ENCODE measurements at regions of chr5 and their contacts with region 1.

Region 1: GRCh38 chr5:150175076-150175935 is 8.7 kb downstream of the CDX1 start:
- DNase-seq: peak in 1 of 2 experiments; percentile 66
- H3K4me3 ChIP-seq: no peak overlapping the region
- H3K27ac ChIP-seq: no peak overlapping the region
- H3K4me1 ChIP-seq: no peaks in the 10 kb centered on the region; a peak in 1 of 7 replicates
- H3K27me3 ChIP-seq: peaks cover 2 to 21% (median 14%) of the 10 kb centered on the region in 4 experiments
- CTCF ChIP-seq: peak; percentile 76 to 92 (median 84)
- EP300 ChIP-seq: no peak
- POLR2A ChIP-seq: no peak
- RAD21 ChIP-seq: peak; percentile 53 to 75

Region 2: GRCh38 chr5:150075871-150076288 is 99.4 kb before region 1 on chr5:
- CTCF ChIA-PET with region 1: interaction called, 20 read pairs
- POLR2A ChIA-PET with region 1: no interaction called
- DNase-seq: peak in 1 of 2 experiments; percentile 32
- H3K4me3 ChIP-seq: no peak overlapping the region
- H3K27ac ChIP-seq: no peak overlapping the region
- H3K4me1 ChIP-seq: no peaks in the 10 kb centered on the region
- H3K27me3 ChIP-seq: no peaks in the 10 kb centered on the region
- CTCF ChIP-seq: peak; percentile 7 to 33 (median 22); a peak in 3 of 4 replicates
- EP300 ChIP-seq: no peak
- POLR2A ChIP-seq: no peak
- RAD21 ChIP-seq: peak; percentile 14 to 35; a peak in 2 of 4 replicates

Region 3: DNA sequence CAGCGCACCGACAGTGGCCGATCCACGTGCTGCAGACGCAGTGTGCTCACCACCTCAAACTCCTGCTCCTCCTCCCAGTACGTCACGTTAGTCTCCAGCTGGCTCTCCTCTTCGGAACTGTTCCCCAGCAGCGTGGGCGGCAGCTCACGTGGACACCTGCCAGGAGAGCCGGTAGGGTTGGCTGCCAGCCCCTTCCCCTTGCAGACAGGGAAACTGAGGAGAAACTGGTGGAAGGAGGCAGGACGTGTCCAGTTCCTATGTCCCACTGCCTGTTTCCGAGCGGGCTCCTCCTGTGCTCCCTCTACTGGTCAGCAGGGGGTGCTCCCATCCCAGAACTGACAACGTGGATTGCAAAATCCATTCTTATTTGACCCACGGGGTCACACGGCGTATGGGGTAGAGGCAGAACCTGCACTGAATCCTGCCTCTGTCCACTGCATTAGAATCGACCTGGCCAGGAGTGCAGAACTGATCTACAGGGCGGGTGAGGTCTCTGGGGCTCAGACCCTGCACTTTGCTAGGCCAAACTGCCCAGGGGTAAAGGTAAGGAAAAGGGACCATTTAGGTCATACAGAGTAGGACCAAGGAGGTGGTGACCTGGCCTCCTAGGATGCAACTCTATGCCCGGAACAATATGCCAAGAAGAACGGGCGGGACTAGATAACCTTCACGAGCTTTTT is 45.4 kb before region 1 on chr5:
- CTCF ChIA-PET with region 1: interaction called, 109 read pairs
- POLR2A ChIA-PET with region 1: interaction called, 3 read pairs
- DNase-seq: peak in 1 of 2 experiments; percentile 87
- H3K4me3 ChIP-seq: no peak overlapping the region
- H3K27ac ChIP-seq: no peak overlapping the region
- H3K4me1 ChIP-seq: peaks cover 5 to 12% (median 6%) of the 10 kb centered on the region in 4 experiments; a peak in 6 of 7 replicates
- H3K27me3 ChIP-seq: peaks cover 0 to 5% (median 3%) of the 10 kb centered on the region in 4 experiments; a peak in 3 of 7 replicates
- CTCF ChIP-seq: peak in 2 of 3 experiments; percentile 88 to 95; a peak in 3 of 4 replicates
- EP300 ChIP-seq: no peak
- POLR2A ChIP-seq: no peak
- RAD21 ChIP-seq: peak; percentile 92 to 93

Region 4: DNA sequence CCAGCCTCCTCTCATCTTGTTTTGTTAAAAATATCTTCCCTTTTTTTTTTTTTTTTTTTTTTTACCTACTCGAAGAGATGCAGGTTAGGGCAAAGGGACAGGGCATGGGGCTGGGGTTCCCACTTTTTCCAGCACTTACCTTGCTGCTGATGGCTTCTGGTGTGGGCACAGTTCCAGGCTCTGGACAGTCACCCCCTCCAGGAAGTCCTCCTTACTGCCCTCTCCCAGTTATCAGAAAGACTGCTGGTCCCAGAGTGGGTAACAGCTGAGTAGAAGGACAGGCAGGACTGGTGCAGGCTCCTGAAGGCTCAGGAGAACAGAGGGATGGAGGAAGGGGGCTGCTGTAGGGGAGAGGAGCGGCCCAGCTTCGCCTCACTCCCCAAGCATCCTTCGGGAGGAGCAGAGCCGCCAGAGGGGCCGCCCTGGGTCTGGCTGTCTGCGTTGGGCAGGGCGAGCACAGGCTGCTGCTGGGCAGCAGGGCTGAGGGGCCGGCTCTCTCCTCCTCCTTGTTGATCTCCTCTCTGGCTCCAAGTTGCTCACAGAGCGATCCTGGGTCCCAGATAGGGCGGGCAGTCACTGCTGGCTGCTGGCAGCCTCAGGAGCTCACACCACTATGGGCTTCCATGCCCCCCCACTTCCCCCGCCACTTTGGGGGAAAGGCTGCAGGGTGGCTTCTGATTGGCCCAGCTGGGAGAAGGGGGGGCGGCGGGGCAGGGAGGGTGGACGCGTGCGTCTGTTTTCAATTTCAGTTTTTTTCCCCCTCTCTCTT is 19.9 kb before region 1 on chr5 and contains the start of gene PDGFRB:
- CTCF ChIA-PET with region 1: interaction called, 268 read pairs
- POLR2A ChIA-PET with region 1: no interaction called
- DNase-seq: peak in 1 of 2 experiments; percentile 79
- H3K4me3 ChIP-seq: peak within 1 kb of the TSS; percentile 7 to 50 (median 24); a peak in 6 of 8 replicates
- H3K27ac ChIP-seq: no peak within 1 kb of the TSS
- H3K4me1 ChIP-seq: peaks cover 6 to 27% (median 13%) of the 10 kb centered on the region in 4 experiments
- H3K27me3 ChIP-seq: no peaks in the 10 kb centered on the region; a peak in 2 of 7 replicates
- CTCF ChIP-seq: no peak
- EP300 ChIP-seq: no peak
- POLR2A ChIP-seq: 0 out of 3 replicates have a peak, but pooled peaks of 1 of the 2 experiments have one; percentile 18
- RAD21 ChIP-seq: peak in 1 of 2 experiments; percentile 12; a peak in 1 of 4 replicates
- total RNA-seq, gene PDGFRB: 13.7 and 15.9 TPM in 2 replicates

Region 5: DNA sequence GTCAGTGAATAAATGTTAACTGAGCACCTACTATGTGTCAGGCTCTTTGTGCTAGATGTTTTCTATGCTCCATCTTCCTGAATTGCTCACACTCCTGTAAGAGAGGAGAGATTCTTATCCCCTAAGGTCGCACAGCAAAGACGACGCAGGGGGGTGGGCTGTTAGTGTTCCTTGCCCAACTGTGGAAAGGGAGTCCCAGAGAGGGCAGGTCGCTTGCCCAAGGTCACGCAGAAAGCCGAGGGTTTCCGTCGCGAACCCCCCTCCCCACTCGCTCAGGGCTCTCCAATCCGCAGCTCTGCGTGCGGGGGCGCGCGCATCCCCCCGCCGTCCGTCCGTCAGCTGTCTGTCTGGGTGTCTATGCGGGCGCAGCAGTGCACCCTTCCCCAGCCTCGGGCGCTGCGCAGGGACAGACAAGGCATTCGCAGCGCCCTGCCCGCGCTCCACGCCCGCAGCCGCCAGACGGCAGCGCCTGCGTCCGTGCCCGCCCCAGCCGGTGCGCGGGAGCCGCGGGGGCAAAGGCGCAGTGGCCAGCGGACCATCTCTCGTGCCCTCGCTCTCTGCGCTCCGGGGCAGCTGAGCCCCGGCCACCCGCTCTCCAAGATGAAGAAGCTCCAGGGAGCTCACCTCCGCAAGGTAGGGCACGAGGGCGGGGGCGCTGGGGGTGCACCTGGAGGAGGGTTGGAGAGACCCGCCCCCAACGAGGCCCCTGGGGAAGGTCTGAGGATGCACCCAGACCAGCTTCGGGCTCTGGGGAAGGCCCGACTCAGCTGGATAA is 14.6 kb after region 1 on chr5 and contains the start of gene SLC6A7:
- CTCF ChIA-PET with region 1: interaction called, 206 read pairs
- POLR2A ChIA-PET with region 1: no interaction called
- DNase-seq: peak in 1 of 2 experiments; percentile 57
- H3K4me3 ChIP-seq: peak within 1 kb of the TSS; percentile 31 to 61 (median 37)
- H3K27ac ChIP-seq: no peak within 1 kb of the TSS
- H3K4me1 ChIP-seq: peaks cover 4 to 26% (median 8%) of the 10 kb centered on the region in 4 experiments
- H3K27me3 ChIP-seq: peaks cover 29 to 65% (median 60%) of the 10 kb centered on the region in 4 experiments
- CTCF ChIP-seq: no peak
- EP300 ChIP-seq: no peak
- POLR2A ChIP-seq: no peak
- RAD21 ChIP-seq: no peak
- total RNA-seq, gene SLC6A7: 0.07 TPM in 1 of 2 replicates, not detected in the other

Region 6: DNA sequence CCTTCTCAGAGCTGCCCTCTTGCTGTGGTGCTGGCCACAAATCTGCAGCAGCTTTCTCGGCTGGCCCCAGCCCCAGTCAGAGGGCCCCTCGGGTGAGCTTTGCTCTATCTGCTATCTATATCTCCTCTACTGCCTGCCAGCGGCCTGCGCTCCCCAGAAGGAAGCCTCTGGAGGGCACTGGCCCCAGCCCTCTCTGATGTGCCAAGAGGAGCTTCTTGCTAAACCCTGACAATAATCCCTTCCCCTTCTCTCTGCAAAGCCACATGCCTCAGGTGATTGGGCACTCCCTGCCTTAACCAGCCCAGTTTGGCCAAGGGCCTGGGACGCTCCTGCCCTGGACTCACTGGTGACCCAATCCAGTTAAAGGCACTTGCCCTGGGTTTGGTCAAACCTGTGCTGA is 71.5 kb after region 1 on chr5:
- CTCF ChIA-PET with region 1: interaction called, 20 read pairs
- POLR2A ChIA-PET with region 1: no interaction called
- DNase-seq: no peak
- H3K4me3 ChIP-seq: no peak overlapping the region
- H3K27ac ChIP-seq: no peak overlapping the region
- H3K4me1 ChIP-seq: 0 out of 7 replicates have a peak, but pooled peaks cover 0 to 2% (median 0%) of the 10 kb centered on the region in 4 experiments
- H3K27me3 ChIP-seq: no peaks in the 10 kb centered on the region
- CTCF ChIP-seq: no peak
- EP300 ChIP-seq: no peak
- POLR2A ChIP-seq: no peak
- RAD21 ChIP-seq: no peak

Region 7: GRCh38 chr5:150286890-150287219 is 111.5 kb after region 1 on chr5:
- CTCF ChIA-PET with region 1: no interaction called
- POLR2A ChIA-PET with region 1: no interaction called
- DNase-seq: peak in 1 of 2 experiments; percentile 57
- H3K4me3 ChIP-seq: no peak overlapping the region
- H3K27ac ChIP-seq: no peak overlapping the region
- H3K4me1 ChIP-seq: peaks cover 0 to 3% (median 0%) of the 10 kb centered on the region in 4 experiments; a peak in 2 of 7 replicates
- H3K27me3 ChIP-seq: no peaks in the 10 kb centered on the region; a peak in 1 of 7 replicates
- CTCF ChIP-seq: peak in 2 of 3 experiments; percentile 93 to 97; a peak in 3 of 4 replicates
- EP300 ChIP-seq: no peak
- POLR2A ChIP-seq: no peak
- RAD21 ChIP-seq: peak; percentile 55 to 68